CD8-positive, alpha-beta T cell (primary cell): ENCODE measurements at regions of chr6 and their contacts with region 1.

Region 1: GRCh38 chr6:157667211-157668008 is 155.6 kb upstream of the SNX9 start:
- DNase-seq: peak; percentile 25 to 74 (median 56)
- ATAC-seq: peak; percentile 71
- H3K4me3 ChIP-seq: no peak overlapping the region
- H3K4me3 Mint-ChIP-seq: no peak overlapping the region
- H3K27ac ChIP-seq: no peak overlapping the region
- H3K27ac Mint-ChIP-seq: no peak overlapping the region
- H3K4me1 ChIP-seq: no peaks in the 10 kb centered on the region
- H3K4me1 Mint-ChIP-seq: peaks cover 22% of the 10 kb centered on the region
- H3K27me3 ChIP-seq: no peaks in the 10 kb centered on the region
- H3K27me3 Mint-ChIP-seq: no peaks in the 10 kb centered on the region
- CTCF ChIP-seq: peak; percentile 97

Region 2: DNA sequence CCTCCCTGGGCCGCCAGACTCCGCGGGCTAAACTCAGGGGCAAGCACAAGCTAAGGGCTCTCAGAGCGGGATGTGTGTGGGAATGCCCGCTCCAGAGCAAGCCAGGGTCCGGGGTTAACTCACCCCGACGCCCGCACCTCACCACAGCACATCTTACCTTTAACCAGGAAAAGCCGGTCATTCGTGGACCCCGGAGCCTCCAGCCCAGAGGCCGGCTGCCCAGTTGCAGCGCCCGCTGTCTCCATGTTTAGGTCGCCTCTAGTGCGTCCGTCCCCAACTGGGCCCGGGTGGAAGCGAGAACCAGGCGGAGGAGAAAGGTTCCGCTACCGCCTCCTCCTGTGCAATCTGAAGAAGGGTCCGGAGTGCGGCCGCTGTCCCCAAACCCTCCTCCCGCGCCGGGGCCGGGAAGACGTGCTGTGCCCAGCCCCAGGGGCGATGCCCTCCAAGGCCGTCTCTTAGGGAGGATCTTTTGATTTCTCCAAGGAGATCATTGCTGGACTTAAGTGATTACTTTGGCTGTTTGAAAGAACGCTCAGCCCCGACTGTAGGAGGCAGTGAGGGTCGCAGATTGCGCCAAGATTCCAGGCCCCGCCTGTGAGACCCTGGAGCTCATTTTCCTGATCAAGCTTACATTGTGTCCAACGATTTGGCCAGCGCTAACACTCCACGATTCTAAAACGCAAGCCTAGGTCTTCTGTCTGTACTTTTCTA is 344.0 kb before region 1 on chr6 and contains the start of gene TMEM242:
- CTCF ChIA-PET with region 1: interaction called, 112 read pairs
- POLR2A ChIA-PET with region 1: no interaction called
- intact Hi-C with region 1: no loop called
- DNase-seq: peak; percentile 78 to 95 (median 87)
- ATAC-seq: peak; percentile 95
- H3K4me3 ChIP-seq: peak within 1 kb of the TSS; percentile 93 to 98
- H3K4me3 Mint-ChIP-seq: peak within 1 kb of the TSS; percentile 88
- H3K27ac ChIP-seq: peak within 1 kb of the TSS; percentile 66 to 75
- H3K27ac Mint-ChIP-seq: peak within 1 kb of the TSS; percentile 86
- H3K4me1 ChIP-seq: peaks cover 8% of the 10 kb centered on the region
- H3K4me1 Mint-ChIP-seq: peaks cover 22% of the 10 kb centered on the region
- H3K27me3 ChIP-seq: no peaks in the 10 kb centered on the region
- H3K27me3 Mint-ChIP-seq: peaks cover 5% of the 10 kb centered on the region
- CTCF ChIP-seq: peak; percentile 24
- total RNA-seq, gene TMEM242: 13.8 to 14.0 TPM

Region 3: DNA sequence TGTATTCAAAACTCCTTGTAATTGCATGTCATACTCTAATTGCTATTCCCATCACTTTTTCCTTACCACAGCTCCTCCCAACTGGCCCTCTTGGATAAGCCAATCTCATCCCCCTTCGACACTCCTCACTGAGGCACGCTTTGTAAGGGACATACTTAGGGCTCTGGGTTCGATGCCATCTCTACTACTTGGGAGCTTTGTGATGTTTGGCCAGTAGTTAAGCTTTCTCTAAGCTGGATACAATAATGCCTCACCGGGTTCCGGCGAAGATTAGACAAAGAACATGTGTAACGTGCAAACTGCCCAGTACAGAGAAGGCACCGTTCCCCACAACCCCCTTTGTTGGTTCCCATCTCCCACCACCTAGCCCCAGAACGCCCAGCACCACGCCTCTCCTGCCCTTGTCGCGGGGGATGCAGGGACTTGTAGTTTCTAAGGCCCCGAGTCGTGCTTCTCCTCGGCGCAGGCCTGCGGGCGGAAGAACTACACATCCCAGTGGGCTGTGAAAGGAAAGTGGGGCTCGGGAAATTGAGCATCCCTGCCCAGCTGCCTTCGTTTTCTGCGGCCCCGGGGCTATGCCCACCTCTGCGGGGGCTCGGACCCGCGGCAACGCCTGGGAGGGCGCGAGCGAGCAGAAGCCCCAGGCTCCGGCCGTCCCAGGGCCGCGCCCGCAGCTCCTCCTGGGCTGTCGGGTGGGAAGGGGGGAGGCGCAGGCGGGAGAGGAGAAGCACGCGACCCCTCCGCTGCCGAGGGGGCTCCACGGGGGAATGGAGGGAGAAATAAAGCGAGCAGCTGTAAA is 287.6 kb before region 1 on chr6:
- CTCF ChIA-PET with region 1: no interaction called
- POLR2A ChIA-PET with region 1: no interaction called
- intact Hi-C with region 1: loop called in 1 of 2 experiments (anchors 5 kb)
- DNase-seq: peak; percentile 76 to 92 (median 89)
- ATAC-seq: peak; percentile 79
- H3K4me3 ChIP-seq: peak overlapping the region; percentile 92 to 96
- H3K4me3 Mint-ChIP-seq: peak overlapping the region; percentile 83
- H3K27ac ChIP-seq: peak overlapping the region; percentile 68 to 80
- H3K27ac Mint-ChIP-seq: peak overlapping the region; percentile 64
- H3K4me1 ChIP-seq: peaks cover 10% of the 10 kb centered on the region
- H3K4me1 Mint-ChIP-seq: peaks cover 20% of the 10 kb centered on the region
- H3K27me3 ChIP-seq: no peaks in the 10 kb centered on the region
- H3K27me3 Mint-ChIP-seq: no peaks in the 10 kb centered on the region
- CTCF ChIP-seq: no peak

Region 4: DNA sequence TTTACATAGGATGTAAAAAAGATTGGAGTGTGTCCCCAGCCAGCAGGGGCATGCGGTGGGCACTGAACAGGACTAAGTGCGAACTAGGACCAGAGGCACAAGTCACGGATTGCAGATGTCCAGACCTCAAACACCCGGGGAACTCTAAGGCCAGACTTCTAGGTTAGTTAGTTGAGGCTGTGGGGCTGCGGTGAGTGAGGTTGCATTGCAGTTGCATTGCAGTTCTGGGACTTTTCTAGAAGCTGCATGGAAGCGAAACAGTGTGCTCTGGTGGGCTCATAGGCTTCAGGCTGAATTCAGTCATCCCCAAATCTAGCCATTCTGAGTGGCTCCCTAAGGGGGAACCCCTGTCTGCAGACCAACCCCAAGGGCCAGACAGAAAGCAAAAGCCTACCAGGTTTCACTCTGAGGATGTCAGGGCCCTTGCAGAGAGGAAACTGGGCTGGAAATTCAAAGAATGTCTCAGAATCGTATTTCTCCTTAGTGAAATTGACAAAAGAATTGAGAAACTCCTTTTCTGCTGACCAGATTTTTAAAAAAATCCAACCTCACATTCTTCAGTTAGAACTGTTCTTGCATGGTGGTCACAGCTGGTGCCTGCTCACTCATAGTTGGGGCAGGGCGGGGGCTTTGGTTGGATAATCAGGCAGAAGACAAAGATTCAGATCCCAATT is 103.7 kb before region 1 on chr6:
- CTCF ChIA-PET with region 1: no interaction called
- POLR2A ChIA-PET with region 1: no interaction called
- intact Hi-C with region 1: no loop called
- DNase-seq: peak in 1 of 9 experiments; percentile 46
- ATAC-seq: no peak
- H3K4me3 ChIP-seq: no peak overlapping the region
- H3K4me3 Mint-ChIP-seq: no peak overlapping the region
- H3K27ac ChIP-seq: no peak overlapping the region
- H3K27ac Mint-ChIP-seq: no peak overlapping the region
- H3K4me1 ChIP-seq: peaks cover 16% of the 10 kb centered on the region
- H3K4me1 Mint-ChIP-seq: peaks cover 36% of the 10 kb centered on the region
- H3K27me3 ChIP-seq: no peaks in the 10 kb centered on the region
- H3K27me3 Mint-ChIP-seq: no peaks in the 10 kb centered on the region
- CTCF ChIP-seq: no peak

Region 5: DNA sequence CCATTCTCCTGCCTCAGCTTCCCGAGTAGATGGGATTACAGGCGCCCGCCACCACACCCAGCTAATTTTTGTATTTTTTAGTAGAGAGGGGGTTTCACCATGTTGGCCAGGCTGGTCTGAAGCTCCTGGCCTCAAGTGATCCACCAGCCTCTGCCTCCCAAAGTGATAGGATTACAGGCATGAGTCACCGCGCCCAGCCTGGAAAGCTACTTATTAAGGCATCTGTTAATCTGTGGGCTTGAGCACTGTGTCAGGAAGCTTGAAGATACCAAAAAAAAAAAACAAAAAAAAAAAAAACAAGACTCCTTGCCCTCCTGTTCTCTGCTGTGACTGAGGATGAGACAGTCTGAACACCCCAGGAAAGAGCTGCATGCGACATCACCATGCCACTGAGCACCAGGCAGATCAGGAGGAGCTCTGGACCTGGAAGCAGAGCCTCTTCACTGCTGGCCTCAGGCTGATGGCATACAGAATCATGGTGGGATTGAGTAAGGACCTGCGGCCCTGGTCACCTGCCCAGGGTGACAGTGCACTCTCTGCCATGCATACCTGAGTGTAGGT is 10.9 kb before region 1 on chr6:
- CTCF ChIA-PET with region 1: interaction called, 41 read pairs
- POLR2A ChIA-PET with region 1: no interaction called
- intact Hi-C with region 1: no loop called
- DNase-seq: no peak
- ATAC-seq: no peak
- H3K4me3 ChIP-seq: no peak overlapping the region
- H3K4me3 Mint-ChIP-seq: no peak overlapping the region
- H3K27ac ChIP-seq: no peak overlapping the region
- H3K27ac Mint-ChIP-seq: no peak overlapping the region
- H3K4me1 ChIP-seq: no peaks in the 10 kb centered on the region
- H3K4me1 Mint-ChIP-seq: no peaks in the 10 kb centered on the region
- H3K27me3 ChIP-seq: no peaks in the 10 kb centered on the region
- H3K27me3 Mint-ChIP-seq: no peaks in the 10 kb centered on the region
- CTCF ChIP-seq: no peak

Region 6: DNA sequence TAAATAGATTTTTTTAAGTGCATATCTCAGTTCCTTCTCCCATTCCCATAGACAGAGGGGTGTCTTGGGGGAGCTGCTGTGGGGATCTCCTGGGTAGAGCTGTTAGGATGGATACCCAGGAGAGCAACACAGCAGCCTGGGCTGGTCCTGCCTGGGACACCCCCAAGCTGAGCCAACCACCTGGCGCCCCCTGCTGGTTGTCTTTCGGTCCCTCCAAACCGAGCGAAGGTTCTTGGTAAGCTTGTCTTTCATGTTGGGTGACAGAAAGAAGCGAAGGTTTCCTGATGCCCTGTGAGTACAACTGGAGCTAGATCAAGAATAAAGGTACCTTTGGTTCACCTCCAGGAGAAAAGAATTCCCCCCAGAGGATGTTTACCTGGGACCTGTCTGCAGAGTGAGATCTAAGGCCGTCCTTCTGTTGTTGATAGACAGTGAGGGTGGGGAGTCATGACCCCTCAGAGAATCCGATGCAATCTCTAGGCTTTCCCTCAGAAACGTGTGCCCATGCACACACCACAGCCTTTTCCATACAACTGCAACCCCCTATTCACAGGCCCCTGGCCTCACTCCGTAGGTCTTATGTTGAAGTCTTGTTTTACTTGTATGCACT is 206.4 kb after region 1 on chr6:
- CTCF ChIA-PET with region 1: interaction called, 8 read pairs
- POLR2A ChIA-PET with region 1: no interaction called
- intact Hi-C with region 1: loop called (anchors 2 to 5 kb)
- DNase-seq: peak; percentile 65 to 91 (median 81)
- ATAC-seq: peak; percentile 76
- H3K4me3 ChIP-seq: no peak overlapping the region
- H3K4me3 Mint-ChIP-seq: no peak overlapping the region
- H3K27ac ChIP-seq: no peak overlapping the region
- H3K27ac Mint-ChIP-seq: no peak overlapping the region
- H3K4me1 ChIP-seq: peaks cover 25% of the 10 kb centered on the region
- H3K4me1 Mint-ChIP-seq: peaks cover 29% of the 10 kb centered on the region
- H3K27me3 ChIP-seq: no peaks in the 10 kb centered on the region
- H3K27me3 Mint-ChIP-seq: no peaks in the 10 kb centered on the region
- CTCF ChIP-seq: peak; percentile 84

Region 7: GRCh38 chr6:157898169-157898568 is 230.8 kb after region 1 on chr6:
- CTCF ChIA-PET with region 1: no interaction called
- POLR2A ChIA-PET with region 1: no interaction called
- intact Hi-C with region 1: loop called in 1 of 2 experiments (anchors 1 kb)
- DNase-seq: peak in 4 of 9 experiments; percentile 44 to 63 (median 54)
- ATAC-seq: peak; percentile 56
- H3K4me3 ChIP-seq: no peak overlapping the region
- H3K4me3 Mint-ChIP-seq: no peak overlapping the region
- H3K27ac ChIP-seq: no peak overlapping the region
- H3K27ac Mint-ChIP-seq: peak overlapping the region; percentile 41
- H3K4me1 ChIP-seq: peaks cover under 1% of the 10 kb centered on the region
- H3K4me1 Mint-ChIP-seq: peaks cover 16% of the 10 kb centered on the region
- H3K27me3 ChIP-seq: no peaks in the 10 kb centered on the region
- H3K27me3 Mint-ChIP-seq: no peaks in the 10 kb centered on the region
- CTCF ChIP-seq: peak; percentile 45

Region 8: GRCh38 chr6:157946865-157947532 is 279.6 kb after region 1 on chr6:
- CTCF ChIA-PET with region 1: interaction called, 6 read pairs
- POLR2A ChIA-PET with region 1: no interaction called
- intact Hi-C with region 1: loop called in 1 of 2 experiments (anchors 1 kb)
- DNase-seq: peak in 4 of 9 experiments; percentile 23 to 61 (median 34)
- ATAC-seq: peak; percentile 66
- H3K4me3 ChIP-seq: no peak overlapping the region
- H3K4me3 Mint-ChIP-seq: no peak overlapping the region
- H3K27ac ChIP-seq: no peak overlapping the region
- H3K27ac Mint-ChIP-seq: peak overlapping the region; percentile 33
- H3K4me1 ChIP-seq: no peaks in the 10 kb centered on the region
- H3K4me1 Mint-ChIP-seq: peaks cover 8% of the 10 kb centered on the region
- H3K27me3 ChIP-seq: no peaks in the 10 kb centered on the region
- H3K27me3 Mint-ChIP-seq: no peaks in the 10 kb centered on the region
- CTCF ChIP-seq: peak; percentile 50